HEK293T (cell line): ENCODE measurements at regions of chr7 and their contacts with region 1.

Region 1: DNA sequence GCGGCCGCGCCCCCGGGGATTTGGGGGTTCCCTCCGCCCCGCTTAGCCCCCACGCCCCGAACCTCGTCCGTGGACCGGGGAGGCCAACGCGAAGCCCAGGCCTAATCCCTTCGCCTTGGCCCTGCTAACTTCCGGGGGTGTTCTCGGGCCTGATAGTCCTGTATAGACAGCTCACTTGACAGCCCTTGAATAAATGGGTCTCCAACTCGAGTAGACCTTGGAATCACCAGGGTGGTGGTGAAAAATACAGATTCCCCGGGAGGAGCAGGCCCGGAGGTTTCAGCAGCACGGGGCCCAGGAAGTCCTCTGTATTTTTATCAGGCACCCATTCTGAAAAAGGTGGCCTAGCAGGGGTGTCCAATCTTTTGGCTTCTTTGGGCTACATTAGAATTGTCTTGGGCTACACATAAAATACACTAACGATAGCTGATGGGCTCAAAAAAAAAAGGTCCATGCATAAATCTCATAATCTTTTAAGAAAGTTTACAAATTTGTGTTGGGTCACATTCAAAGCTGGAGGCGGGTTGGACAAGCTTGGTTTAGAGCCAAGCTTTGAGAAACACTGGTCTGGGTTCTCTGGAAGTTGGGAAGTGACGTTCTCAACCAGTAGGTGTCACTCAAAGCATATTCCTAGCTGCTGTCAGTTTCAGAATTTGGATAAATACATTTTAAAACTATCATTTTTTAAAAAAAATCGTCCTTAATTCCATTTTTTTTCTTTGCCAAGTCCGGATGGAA is 221.7 kb downstream of the PHTF2 start:
- DNase-seq: peak; percentile 60

Region 2: GRCh38 chr7:78037603-78038002 is 17.3 kb after region 1 on chr7:
- CTCF ChIA-PET with region 1: interaction called, 15 read pairs
- POLR2A ChIA-PET with region 1: interaction called, 5 read pairs
- DNase-seq: no peak